ENCODE measurements at regions of chr9 and their contacts with region 1.

Region 1: DNA sequence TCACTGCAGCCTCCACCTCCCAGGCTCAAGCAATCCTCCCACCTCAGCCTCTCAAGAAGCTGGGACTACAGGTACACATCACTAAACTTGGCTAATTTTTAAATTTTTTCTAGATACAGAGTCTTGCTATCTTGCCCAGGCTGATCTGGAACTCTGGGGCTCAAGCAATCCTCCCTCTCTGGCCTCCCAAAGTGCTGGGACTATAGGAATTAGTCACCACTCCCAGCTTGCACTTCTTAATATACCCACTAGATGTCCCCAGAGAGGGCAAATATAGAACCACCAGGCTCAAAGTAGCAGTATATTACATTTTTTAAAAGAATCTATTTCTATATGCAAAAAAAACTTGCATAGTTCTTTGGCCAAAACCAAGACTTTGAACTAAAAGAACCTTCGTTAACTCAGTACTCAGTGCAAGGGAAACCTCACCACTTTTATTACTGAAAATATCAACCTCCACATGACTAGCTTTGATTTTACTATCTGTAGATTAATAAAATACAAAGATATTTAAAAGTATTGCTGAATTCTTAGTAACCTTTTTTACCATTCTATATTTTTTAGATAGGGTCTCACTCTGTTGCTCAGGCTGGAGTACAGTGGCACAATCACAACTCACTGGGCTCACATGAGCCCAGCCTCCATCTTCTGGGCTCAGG is 25.8 kb upstream of the HSD17B3 start:
- DNase-seq: peak in 2 of 5 donors; percentile 34 to 53
- H3K4me3 ChIP-seq: no peak overlapping the region
- H3K27ac ChIP-seq: no peak overlapping the region
- H3K4me1 ChIP-seq: no peaks in the 10 kb centered on the region
- H3K27me3 ChIP-seq: no peaks in the 10 kb centered on the region
- CTCF ChIP-seq: peak; percentile 75 to 84 (median 83)
- EP300 ChIP-seq: no peak
- POLR2A ChIP-seq: no peak

Region 2: GRCh38 chr9:96654443-96655197 is 326.8 kb after region 1 on chr9:
- intact Hi-C with region 1: loop called in 1 of 4 experiments (anchors 10 kb)
- DNase-seq: peak; percentile 74 to 89 (median 84)
- H3K4me3 ChIP-seq: peak overlapping the region; percentile 63
- H3K27ac ChIP-seq: peak overlapping the region; percentile 92 to 97
- H3K4me1 ChIP-seq: peaks cover 1% of the 10 kb centered on the region
- H3K27me3 ChIP-seq: no peaks in the 10 kb centered on the region
- CTCF ChIP-seq: peak in 2 of 3 donors; percentile 27 to 34
- EP300 ChIP-seq: no peak
- POLR2A ChIP-seq: peak; percentile 52

Region 3: DNA sequence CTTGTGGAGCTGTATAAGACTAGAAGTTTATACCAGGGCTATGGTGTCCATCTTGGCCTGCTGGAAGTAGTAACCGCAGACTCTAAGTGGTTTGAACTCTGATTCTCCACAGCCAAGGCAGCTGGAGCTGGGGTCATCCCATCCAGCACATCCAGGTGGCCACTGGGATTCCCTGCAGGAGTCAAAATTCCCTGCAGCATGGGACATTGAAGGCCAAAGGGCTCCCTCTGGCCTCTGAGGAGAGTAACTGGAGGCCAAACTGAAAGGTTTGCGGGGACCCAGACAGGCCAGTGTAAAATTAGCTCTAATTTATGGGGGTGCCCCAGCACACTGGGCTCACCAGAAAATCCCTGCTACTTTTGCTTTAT is 339.5 kb after region 1 on chr9:
- intact Hi-C with region 1: loop called in 2 of 4 experiments (anchors 5 kb)
- DNase-seq: no peak
- H3K4me3 ChIP-seq: no peak overlapping the region
- H3K27ac ChIP-seq: no peak overlapping the region
- H3K4me1 ChIP-seq: no peaks in the 10 kb centered on the region
- H3K27me3 ChIP-seq: no peaks in the 10 kb centered on the region
- CTCF ChIP-seq: no peak
- EP300 ChIP-seq: no peak
- POLR2A ChIP-seq: no peak